Activated naive CD4-positive, alpha-beta T cell treated with anti-CD3 and anti-CD28 coated beads for 36 hours (primary cell): ENCODE measurements at regions of chr17 and their contacts with region 1.

Region 1: GRCh38 chr17:70636517-70637133 is 467.3 kb downstream of the KCNJ2 start:
- DNase-seq: no peak
- H3K4me3 Mint-ChIP-seq: no peak overlapping the region
- H3K27ac Mint-ChIP-seq: no peak overlapping the region
- H3K4me1 Mint-ChIP-seq: no peaks in the 10 kb centered on the region
- H3K27me3 Mint-ChIP-seq: peaks cover 2% of the 10 kb centered on the region

Region 2: DNA sequence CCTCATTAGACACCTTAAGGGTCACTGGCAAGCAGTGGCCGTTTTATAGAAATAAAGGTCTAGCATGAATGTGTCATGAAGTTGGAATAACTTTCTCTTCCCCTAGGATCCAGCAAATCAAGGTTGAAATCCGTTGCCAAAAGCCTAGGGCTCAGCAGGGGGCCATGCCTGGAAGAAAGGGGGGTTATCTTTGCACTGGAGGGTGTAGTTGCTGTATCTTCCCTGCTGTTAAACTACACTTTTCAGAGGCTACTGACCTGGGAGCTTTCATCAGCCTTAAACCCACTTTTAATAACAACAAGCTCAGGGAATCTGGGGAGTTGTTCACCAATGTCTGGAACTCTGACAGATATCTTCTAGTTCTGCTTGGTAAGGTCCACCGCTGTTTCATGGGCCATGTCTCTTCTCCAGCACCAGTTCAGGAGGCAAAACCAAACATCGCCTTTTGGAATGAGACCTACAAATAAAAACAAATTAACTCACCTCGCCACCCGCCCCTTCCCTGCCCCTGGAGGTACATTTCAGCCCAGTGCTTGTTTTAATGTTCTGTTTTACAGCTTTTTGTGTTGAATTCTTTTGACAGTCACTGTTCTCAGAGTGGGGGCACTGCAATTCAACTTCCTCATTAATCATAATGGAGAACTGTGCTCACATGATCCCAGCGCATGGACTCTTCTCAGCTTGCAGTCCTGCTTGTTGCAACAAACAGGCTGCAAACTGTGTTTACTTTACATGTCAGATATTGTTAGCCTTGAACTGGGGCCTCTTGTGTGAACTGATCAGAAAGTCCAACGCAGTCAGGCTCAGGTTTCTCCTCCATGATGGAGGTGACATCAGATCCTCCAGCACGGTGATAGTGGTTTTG is 41.4 kb after region 1 on chr17:
- CTCF ChIA-PET with region 1: no interaction called
- intact Hi-C with region 1: no loop called
- DNase-seq: no peak
- H3K4me3 Mint-ChIP-seq: no peak overlapping the region
- H3K27ac Mint-ChIP-seq: no peak overlapping the region
- H3K4me1 Mint-ChIP-seq: no peaks in the 10 kb centered on the region
- H3K27me3 Mint-ChIP-seq: peaks cover 5% of the 10 kb centered on the region

Region 3: GRCh38 chr17:71084219-71084618 is 447.6 kb after region 1 on chr17:
- CTCF ChIA-PET with region 1: no interaction called
- intact Hi-C with region 1: loop called (anchors 2 kb)
- DNase-seq: peak; percentile 4
- H3K4me3 Mint-ChIP-seq: no peak overlapping the region
- H3K27ac Mint-ChIP-seq: no peak overlapping the region
- H3K4me1 Mint-ChIP-seq: no peaks in the 10 kb centered on the region
- H3K27me3 Mint-ChIP-seq: no peaks in the 10 kb centered on the region

Region 4: DNA sequence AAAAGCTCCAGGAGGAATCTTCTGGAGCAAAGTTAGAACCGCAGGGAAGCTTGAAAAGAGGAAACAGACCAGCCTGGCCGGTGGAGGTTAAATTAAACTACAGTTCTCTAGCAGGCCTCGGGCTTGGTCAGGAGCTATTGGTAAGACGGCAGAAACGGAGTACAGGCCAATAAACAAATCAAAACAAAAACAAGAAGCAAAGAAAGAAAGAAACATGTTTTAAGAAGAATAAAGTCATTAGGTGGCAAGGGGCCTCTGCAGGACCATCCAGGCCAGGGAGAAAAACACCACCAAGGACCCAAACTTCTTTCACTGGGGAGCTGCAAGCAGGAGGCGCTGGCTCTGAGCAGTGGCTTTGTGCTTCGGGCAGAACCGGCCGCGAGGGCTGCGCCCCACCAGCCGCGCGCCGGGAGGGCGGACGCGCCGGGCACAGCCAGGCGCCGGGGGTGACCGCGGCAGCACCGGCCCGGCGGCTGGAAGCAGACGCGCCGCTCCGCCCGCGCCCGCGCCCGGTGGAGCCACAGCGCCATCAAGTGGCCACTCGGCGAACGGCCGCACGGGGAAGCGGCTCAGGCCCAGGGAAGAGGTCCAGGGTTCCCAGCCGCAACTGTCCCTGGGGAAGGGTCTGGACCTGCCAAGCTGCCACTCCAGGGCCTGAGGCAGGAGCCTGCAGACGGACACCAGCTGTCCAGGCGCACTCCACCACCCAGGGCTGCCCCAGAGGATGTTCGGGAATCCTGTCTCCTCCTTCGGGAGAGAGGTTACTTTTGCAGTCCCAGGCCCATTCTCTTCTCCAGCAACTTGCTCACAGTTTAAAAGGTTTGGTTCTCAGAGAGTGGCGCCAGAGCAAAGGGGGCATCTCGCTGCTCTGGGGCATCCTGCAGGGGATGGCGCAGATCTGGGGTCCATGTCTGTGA is 1903.6 kb after region 1 on chr17:
- CTCF ChIA-PET with region 1: no interaction called
- intact Hi-C with region 1: loop called (anchors 1 kb)
- DNase-seq: peak; percentile 57
- H3K4me3 Mint-ChIP-seq: no peak overlapping the region
- H3K27ac Mint-ChIP-seq: peak overlapping the region; percentile 31
- H3K4me1 Mint-ChIP-seq: peaks cover 3% of the 10 kb centered on the region
- H3K27me3 Mint-ChIP-seq: peaks cover 35% of the 10 kb centered on the region